ENCODE measurements at regions of chr12 and their contacts with region 1.

Region 1: GRCh38 chr12:102061560-102062418 is at the start of gene WASHC3:
- DNase-seq: peak; percentile 94
- H3K4me3 ChIP-seq: peak within 1 kb of the TSS; percentile 90
- H3K27ac ChIP-seq: peak within 1 kb of the TSS; percentile 34
- H3K4me1 ChIP-seq: peaks cover 6% of the 10 kb centered on the region
- CTCF ChIP-seq: no peak
- total RNA-seq, gene WASHC3: 28.4 and 29.2 TPM in 2 replicates

Region 2: GRCh38 chr12:102119674-102120563 is 58.1 kb after region 1 on chr12 and contains the starts of genes NUP37 and PARPBP:
- CTCF ChIA-PET with region 1: no interaction called
- POLR2A ChIA-PET with region 1: interaction called, 8 read pairs
- intact Hi-C with region 1: loop called (anchors 2 kb)
- DNase-seq: peak; percentile 93
- H3K4me3 ChIP-seq: peak within 1 kb of the TSS; percentile 98
- H3K27ac ChIP-seq: peak within 1 kb of the TSS; percentile 81
- H3K4me1 ChIP-seq: peaks cover 31% of the 10 kb centered on the region
- CTCF ChIP-seq: no peak
- total RNA-seq, gene NUP37: 32.9 and 40.6 TPM in 2 replicates
- total RNA-seq, gene PARPBP: 32.9 and 48.8 TPM in 2 replicates

Region 3: GRCh38 chr12:102421801-102422583 is 360.2 kb after region 1 on chr12:
- CTCF ChIA-PET with region 1: no interaction called
- POLR2A ChIA-PET with region 1: no interaction called
- intact Hi-C with region 1: no loop called
- DNase-seq: no peak
- H3K4me3 ChIP-seq: no peak overlapping the region
- H3K27ac ChIP-seq: no peak overlapping the region
- H3K4me1 ChIP-seq: no peaks in the 10 kb centered on the region
- CTCF ChIP-seq: no peak